Activated CD4-positive, alpha-beta T cell treated with anti-CD3 and anti-CD28 coated beads for 36 hours (primary cell): ENCODE measurements at regions of chr10 and their contacts with region 1.

Region 1: GRCh38 chr10:12264204-12264940 is 68.4 kb downstream of the CDC123 start:
- DNase-seq: peak; percentile 88
- ATAC-seq: peak; percentile 93
- H3K4me3 Mint-ChIP-seq: peak overlapping the region; percentile 42
- H3K27ac Mint-ChIP-seq: peak overlapping the region; percentile 83
- H3K4me1 Mint-ChIP-seq: peaks cover 17% of the 10 kb centered on the region
- H3K27me3 Mint-ChIP-seq: no peaks in the 10 kb centered on the region

Region 2: DNA sequence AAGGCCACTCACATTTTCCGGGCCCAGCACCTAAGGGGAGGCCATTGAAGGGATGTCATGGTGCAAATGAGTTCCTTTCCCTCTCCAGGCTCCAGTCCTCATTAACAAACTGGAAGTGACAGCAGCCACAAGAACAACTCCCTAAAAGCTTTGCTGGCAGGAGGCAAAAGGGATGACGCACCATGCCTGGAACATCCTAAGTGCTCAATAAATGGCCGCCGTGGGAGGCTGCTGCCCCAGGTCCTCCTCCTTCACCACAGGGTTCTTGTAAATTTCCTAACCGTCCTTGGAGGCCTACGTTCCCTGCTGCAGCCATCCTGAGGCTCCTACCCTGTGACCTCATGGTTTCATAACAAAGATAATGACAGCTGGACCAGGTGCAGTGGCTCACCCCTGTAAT is 43.7 kb after region 1 on chr10:
- CTCF ChIA-PET with region 1: no interaction called
- POLR2A ChIA-PET with region 1: interaction called, 4 read pairs
- intact Hi-C with region 1: loop called in 1 of 2 experiments (anchors 2 kb)
- DNase-seq: peak; percentile 40
- ATAC-seq: peak; percentile 28
- H3K4me3 Mint-ChIP-seq: no peak overlapping the region
- H3K27ac Mint-ChIP-seq: no peak overlapping the region
- H3K4me1 Mint-ChIP-seq: peaks cover 16% of the 10 kb centered on the region
- H3K27me3 Mint-ChIP-seq: no peaks in the 10 kb centered on the region

Region 3: GRCh38 chr10:12484941-12485805 is 220.8 kb after region 1 on chr10:
- CTCF ChIA-PET with region 1: interaction called, 11 read pairs
- POLR2A ChIA-PET with region 1: no interaction called
- intact Hi-C with region 1: loop called (anchors 1 to 2 kb)
- DNase-seq: peak; percentile 64
- ATAC-seq: peak; percentile 82
- H3K4me3 Mint-ChIP-seq: peak overlapping the region; percentile 4
- H3K27ac Mint-ChIP-seq: peak overlapping the region; percentile 73
- H3K4me1 Mint-ChIP-seq: peaks cover 25% of the 10 kb centered on the region
- H3K27me3 Mint-ChIP-seq: no peaks in the 10 kb centered on the region

Region 4: GRCh38 chr10:12625393-12626023 is 361.1 kb after region 1 on chr10:
- CTCF ChIA-PET with region 1: no interaction called
- POLR2A ChIA-PET with region 1: no interaction called
- intact Hi-C with region 1: no loop called
- DNase-seq: no peak
- ATAC-seq: no peak
- H3K4me3 Mint-ChIP-seq: no peak overlapping the region
- H3K27ac Mint-ChIP-seq: no peak overlapping the region
- H3K4me1 Mint-ChIP-seq: peaks cover 17% of the 10 kb centered on the region
- H3K27me3 Mint-ChIP-seq: no peaks in the 10 kb centered on the region

Region 5: DNA sequence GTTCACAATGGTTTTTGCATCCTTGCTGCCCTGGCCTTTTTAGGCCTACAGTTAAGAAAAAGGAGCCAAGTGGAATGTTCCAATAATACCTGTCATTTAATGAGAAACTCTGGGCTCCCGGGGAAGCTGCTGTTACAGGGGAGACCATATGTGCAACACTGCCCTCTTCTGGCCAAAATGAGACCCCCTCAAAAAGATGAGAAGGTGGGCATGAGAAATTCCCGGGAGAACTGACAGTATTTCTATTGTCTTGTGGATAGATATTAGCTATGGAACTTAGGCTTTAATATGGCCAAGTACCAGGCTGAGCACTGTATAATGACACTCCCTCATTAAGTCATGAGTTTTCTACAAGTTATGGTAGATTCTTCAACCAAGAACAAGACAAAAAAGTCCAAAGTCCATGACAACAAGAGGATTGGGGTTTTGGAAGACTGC is 637.8 kb after region 1 on chr10:
- CTCF ChIA-PET with region 1: no interaction called
- POLR2A ChIA-PET with region 1: no interaction called
- intact Hi-C with region 1: loop called (anchors 2 to 5 kb)
- DNase-seq: peak; percentile 72
- ATAC-seq: peak; percentile 53
- H3K4me3 Mint-ChIP-seq: no peak overlapping the region
- H3K27ac Mint-ChIP-seq: no peak overlapping the region
- H3K4me1 Mint-ChIP-seq: no peaks in the 10 kb centered on the region
- H3K27me3 Mint-ChIP-seq: peaks cover 11% of the 10 kb centered on the region